ENCODE measurements at regions of chr20 and their contacts with region 1.

Region 1: GRCh38 chr20:33674295-33675135 is at the start of gene NECAB3:
- DNase-seq: peak; percentile 83
- ATAC-seq: peak; percentile 86
- H3K4me3 ChIP-seq: peak within 1 kb of the TSS; percentile 92
- H3K27ac ChIP-seq: no peak within 1 kb of the TSS
- H3K4me1 ChIP-seq: peaks cover 21% of the 10 kb centered on the region
- H3K27me3 ChIP-seq: no peaks in the 10 kb centered on the region
- CTCF ChIP-seq: no peak
- total RNA-seq, gene NECAB3: 41.2 and 43.5 TPM in 2 replicates

Region 2: GRCh38 chr20:33606118-33606771 is 68.3 kb before region 1 on chr20:
- CTCF ChIA-PET with region 1: no interaction called
- POLR2A ChIA-PET with region 1: no interaction called
- intact Hi-C with region 1: no loop called
- DNase-seq: no peak
- ATAC-seq: no peak
- H3K4me3 ChIP-seq: no peak overlapping the region
- H3K27ac ChIP-seq: no peak overlapping the region
- H3K4me1 ChIP-seq: no peaks in the 10 kb centered on the region
- H3K27me3 ChIP-seq: no peaks in the 10 kb centered on the region
- CTCF ChIP-seq: no peak

Region 3: DNA sequence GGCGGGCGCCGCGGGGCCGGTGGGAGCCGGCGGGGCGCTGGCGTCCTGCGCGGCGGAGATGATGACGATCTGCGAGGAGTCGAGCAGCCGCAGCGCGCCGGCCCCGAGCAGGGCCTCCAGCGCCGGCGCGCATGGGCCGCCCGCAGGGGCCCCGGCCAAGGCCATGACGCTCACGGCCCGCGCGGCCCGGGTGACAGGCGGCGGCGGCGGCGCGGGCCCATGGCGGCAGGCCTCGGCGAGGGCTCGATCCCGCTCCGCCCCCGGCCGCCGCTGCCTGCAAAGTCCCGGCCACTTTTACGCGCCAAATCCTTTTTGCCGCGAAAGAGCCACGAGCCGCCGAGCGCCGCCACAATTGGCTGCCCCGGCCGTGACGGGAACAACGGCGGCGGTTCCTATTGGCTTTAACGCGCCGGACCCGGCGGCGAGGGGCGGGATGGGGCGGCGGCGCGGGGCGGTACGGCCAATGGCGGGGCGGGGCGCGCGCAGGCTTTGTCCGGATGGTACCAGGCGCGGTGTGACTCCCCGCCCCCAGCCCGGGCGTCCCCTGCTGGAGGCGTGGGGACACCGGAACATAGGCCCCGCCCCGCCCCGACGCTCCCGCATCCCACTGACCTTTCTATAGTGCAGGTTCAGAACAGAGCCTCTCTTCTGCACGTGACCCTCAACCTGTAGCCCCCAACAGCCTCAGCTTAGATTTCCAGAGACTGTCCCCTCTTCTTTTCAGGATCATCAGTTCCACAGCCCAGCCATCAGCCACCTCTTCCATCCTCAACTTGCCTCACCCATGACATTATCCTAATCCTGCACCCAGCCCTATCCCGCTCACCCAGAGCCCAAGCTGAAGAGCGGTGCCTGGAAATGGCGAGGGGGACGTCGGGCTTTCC is 11.8 kb after region 1 on chr20 and contains the start of gene E2F1:
- CTCF ChIA-PET with region 1: no interaction called
- POLR2A ChIA-PET with region 1: interaction called, 16 read pairs
- intact Hi-C with region 1: no loop called
- DNase-seq: peak; percentile 95
- ATAC-seq: peak; percentile 97
- H3K4me3 ChIP-seq: peak within 1 kb of the TSS; percentile 82
- H3K27ac ChIP-seq: no peak within 1 kb of the TSS
- H3K4me1 ChIP-seq: peaks cover 18% of the 10 kb centered on the region
- H3K27me3 ChIP-seq: no peaks in the 10 kb centered on the region
- CTCF ChIP-seq: no peak
- total RNA-seq, gene E2F1: 63.7 and 72.2 TPM in 2 replicates

Region 4: DNA sequence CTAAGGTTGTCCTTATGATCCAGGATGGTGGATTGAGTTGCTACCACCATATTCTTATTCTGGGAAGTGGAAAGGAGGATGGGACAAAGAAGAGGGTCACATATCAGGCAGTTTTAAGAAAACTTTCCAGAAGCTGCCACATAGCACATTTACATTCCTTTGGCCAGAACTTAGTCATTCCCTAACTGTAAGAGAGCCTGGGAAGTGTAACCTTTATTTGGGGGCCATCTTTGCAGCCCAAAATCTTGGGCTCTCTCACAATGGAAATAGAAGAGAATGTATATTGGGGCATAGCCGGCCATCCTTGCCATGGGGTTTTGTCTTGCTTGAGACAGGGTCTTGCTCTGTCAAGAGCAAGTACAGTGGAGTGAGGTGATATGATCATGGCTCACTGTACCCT is 65.7 kb after region 1 on chr20:
- CTCF ChIA-PET with region 1: no interaction called
- POLR2A ChIA-PET with region 1: no interaction called
- intact Hi-C with region 1: no loop called
- DNase-seq: no peak
- ATAC-seq: no peak
- H3K4me3 ChIP-seq: no peak overlapping the region
- H3K27ac ChIP-seq: no peak overlapping the region
- H3K4me1 ChIP-seq: no peaks in the 10 kb centered on the region
- H3K27me3 ChIP-seq: no peaks in the 10 kb centered on the region
- CTCF ChIP-seq: no peak